ENCODE measurements at regions of chr13 and their contacts with region 1.

Region 1: GRCh38 chr13:104011505-104012241 is 945.5 kb upstream of the SLC10A2 start:
- DNase-seq: peak; percentile 91

Region 2: DNA sequence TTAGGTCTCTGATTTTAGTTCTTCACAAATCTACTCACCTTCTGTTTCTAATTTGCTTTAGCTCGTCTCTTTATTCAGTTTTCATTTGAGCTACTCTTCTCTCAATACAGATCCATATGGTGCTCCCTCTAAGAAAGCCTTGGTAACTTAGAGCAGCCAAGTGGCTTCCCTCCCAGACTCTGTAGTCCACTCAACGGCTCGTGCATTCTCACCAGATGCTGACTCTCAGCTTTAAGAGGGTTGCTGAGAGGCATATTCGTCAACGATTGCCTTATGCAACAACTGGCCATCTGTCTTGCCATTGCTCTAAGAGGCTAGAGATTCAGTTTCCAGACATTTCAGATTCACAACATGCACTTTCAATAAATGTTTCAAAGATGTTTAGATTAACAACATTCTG is 159.6 kb before region 1 on chr13:
- in situ Hi-C with region 1: no loop called
- DNase-seq: no peak

Region 3: DNA sequence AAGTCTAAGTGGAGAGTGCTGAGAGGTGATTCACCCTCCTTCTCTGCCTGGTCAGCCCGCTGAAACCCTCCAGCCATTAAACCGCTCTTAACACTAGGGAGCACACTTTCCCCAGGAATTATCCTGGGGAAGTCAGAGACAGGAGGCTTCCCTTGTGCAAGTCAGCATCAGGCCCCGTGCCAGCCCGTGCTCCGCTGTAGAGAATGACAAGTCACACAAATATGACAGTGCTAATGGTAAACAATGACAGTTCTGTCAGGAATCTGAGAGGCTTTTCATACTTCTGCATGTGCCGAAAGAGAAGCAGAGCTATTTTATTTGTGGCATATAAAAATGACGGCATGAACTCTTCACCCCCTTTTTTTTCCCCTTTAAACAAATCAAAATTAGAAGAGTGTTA is 128.5 kb before region 1 on chr13:
- in situ Hi-C with region 1: loop called (anchors 25 kb)
- DNase-seq: peak; percentile 94

Measured in Caki2 (cell line).